Naive thymus-derived CD4-positive, alpha-beta T cell (primary cell): ENCODE measurements at regions of chr14 and their contacts with region 1.

Region 1: GRCh38 chr14:99628832-99629618 is 15.9 kb upstream of the HHIPL1 start:
- DNase-seq: peak; percentile 30 to 66 (median 45)
- ATAC-seq: peak; percentile 79
- H3K4me3 ChIP-seq: no peak overlapping the region
- H3K4me3 Mint-ChIP-seq: no peak overlapping the region
- H3K27ac ChIP-seq: no peak overlapping the region
- H3K27ac Mint-ChIP-seq: peak overlapping the region in 1 of 9 donors; percentile 51
- H3K4me1 ChIP-seq: no peaks in the 10 kb centered on the region
- H3K4me1 Mint-ChIP-seq: peaks cover 0 to 4% (median 2%) of the 10 kb centered on the region in 7 donors
- H3K27me3 ChIP-seq: peaks cover 0 to 4% of the 10 kb centered on the region in 2 donors
- H3K27me3 Mint-ChIP-seq: peaks cover 2 to 28% (median 9%) of the 10 kb centered on the region in 5 donors

Region 2: GRCh38 chr14:99518441-99519346 is 110.3 kb before region 1 on chr14:
- CTCF ChIA-PET with region 1: interaction called, 6 read pairs
- POLR2A ChIA-PET with region 1: no interaction called
- intact Hi-C with region 1: loop called (anchors 1 kb)
- DNase-seq: peak; percentile 69 to 91 (median 81)
- ATAC-seq: peak; percentile 84
- H3K4me3 ChIP-seq: no peak overlapping the region
- H3K4me3 Mint-ChIP-seq: no peak overlapping the region
- H3K27ac ChIP-seq: no peak overlapping the region
- H3K27ac Mint-ChIP-seq: peak overlapping the region in 1 of 9 donors; percentile 5
- H3K4me1 ChIP-seq: no peaks in the 10 kb centered on the region
- H3K4me1 Mint-ChIP-seq: no peaks in the 10 kb centered on the region
- H3K27me3 ChIP-seq: no peaks in the 10 kb centered on the region
- H3K27me3 Mint-ChIP-seq: no peaks in the 10 kb centered on the region

Region 3: DNA sequence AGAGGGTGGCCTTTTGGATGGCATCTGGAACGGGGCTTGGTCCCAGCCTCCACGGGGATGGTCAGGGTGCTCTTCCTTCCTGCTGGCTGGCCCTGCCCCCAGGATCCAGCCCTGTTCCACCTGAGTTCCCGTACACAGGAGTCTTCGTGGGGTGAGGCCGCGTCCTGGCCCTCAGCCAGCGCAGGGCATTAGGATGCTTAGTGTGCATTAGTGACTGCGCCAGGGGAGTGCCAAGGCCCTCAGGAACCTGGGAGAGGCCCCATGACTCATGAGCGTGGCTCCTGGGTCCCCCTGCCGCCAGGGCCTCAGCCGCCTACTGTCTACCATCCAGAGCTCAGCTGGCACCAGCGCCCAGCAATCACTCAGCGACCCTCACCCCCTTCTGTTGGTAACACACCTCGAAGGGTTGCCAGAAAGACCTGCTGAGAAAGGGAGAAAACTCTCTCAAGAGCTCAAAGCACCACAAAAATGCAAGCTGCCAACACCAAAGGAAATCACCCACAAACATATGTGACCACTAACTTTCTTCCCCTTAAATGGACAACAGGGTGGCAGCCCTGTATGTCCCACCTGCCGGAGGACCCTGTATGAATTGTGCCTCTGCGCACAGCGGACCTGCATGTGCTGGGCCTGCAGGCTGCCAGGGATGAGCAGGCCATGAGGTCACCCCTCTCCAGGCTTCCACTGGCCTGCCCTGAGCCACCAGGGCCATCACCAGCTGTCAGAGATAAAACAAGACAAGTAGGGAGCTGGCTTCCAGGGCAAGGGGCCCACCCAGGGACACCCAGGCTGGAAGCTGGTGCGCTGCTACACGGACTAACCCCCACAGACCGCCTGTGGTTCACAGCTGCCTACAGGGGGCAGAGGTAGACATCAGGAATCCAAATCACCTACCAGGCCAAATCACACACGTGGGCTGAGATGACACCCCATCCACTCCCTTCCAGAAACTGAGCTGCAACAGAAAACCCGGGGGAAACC is 53.7 kb before region 1 on chr14:
- CTCF ChIA-PET with region 1: no interaction called
- POLR2A ChIA-PET with region 1: no interaction called
- intact Hi-C with region 1: loop called in 1 of 2 experiments (anchors 1 kb)
- DNase-seq: no peak
- ATAC-seq: no peak
- H3K4me3 ChIP-seq: no peak overlapping the region
- H3K4me3 Mint-ChIP-seq: no peak overlapping the region
- H3K27ac ChIP-seq: no peak overlapping the region
- H3K27ac Mint-ChIP-seq: no peak overlapping the region
- H3K4me1 ChIP-seq: no peaks in the 10 kb centered on the region
- H3K4me1 Mint-ChIP-seq: peaks cover 0 to 15% (median 0%) of the 10 kb centered on the region in 7 donors
- H3K27me3 ChIP-seq: no peaks in the 10 kb centered on the region
- H3K27me3 Mint-ChIP-seq: no peaks in the 10 kb centered on the region